Calu3 (cell line): ENCODE measurements at regions of chr9 and their contacts with region 1.

Region 1: GRCh38 chr9:85258823-85259370 is 482.9 kb downstream of the AGTPBP1 start:
- DNase-seq: peak; percentile 74
- H3K4me3 Mint-ChIP-seq: peak overlapping the region; percentile 62
- H3K27ac Mint-ChIP-seq: peak overlapping the region; percentile 87
- H3K4me1 Mint-ChIP-seq: peaks cover 25% of the 10 kb centered on the region
- H3K27me3 Mint-ChIP-seq: no peaks in the 10 kb centered on the region
- CTCF ChIP-seq: peak; percentile 45

Region 2: GRCh38 chr9:84697509-84698114 is 561.3 kb before region 1 on chr9:
- CTCF ChIA-PET with region 1: interaction called, 7 read pairs
- intact Hi-C with region 1: loop called (anchors 5 kb)
- DNase-seq: peak; percentile 78
- H3K4me3 Mint-ChIP-seq: no peak overlapping the region
- H3K27ac Mint-ChIP-seq: no peak overlapping the region
- H3K4me1 Mint-ChIP-seq: no peaks in the 10 kb centered on the region
- H3K27me3 Mint-ChIP-seq: no peaks in the 10 kb centered on the region
- CTCF ChIP-seq: peak; percentile 53

Region 3: GRCh38 chr9:84793251-84793650 is 465.6 kb before region 1 on chr9:
- CTCF ChIA-PET with region 1: no interaction called
- intact Hi-C with region 1: loop called (anchors 5 kb)
- DNase-seq: no peak
- H3K4me3 Mint-ChIP-seq: no peak overlapping the region
- H3K27ac Mint-ChIP-seq: no peak overlapping the region
- H3K4me1 Mint-ChIP-seq: peaks cover 27% of the 10 kb centered on the region
- H3K27me3 Mint-ChIP-seq: no peaks in the 10 kb centered on the region
- CTCF ChIP-seq: no peak

Region 4: GRCh38 chr9:84953797-84954705 is 304.8 kb before region 1 on chr9:
- CTCF ChIA-PET with region 1: interaction called, 3 read pairs
- intact Hi-C with region 1: loop called (anchors 10 kb)
- DNase-seq: peak; percentile 77
- H3K4me3 Mint-ChIP-seq: no peak overlapping the region
- H3K27ac Mint-ChIP-seq: no peak overlapping the region
- H3K4me1 Mint-ChIP-seq: peaks cover 9% of the 10 kb centered on the region
- H3K27me3 Mint-ChIP-seq: no peaks in the 10 kb centered on the region
- CTCF ChIP-seq: peak; percentile 75

Region 5: DNA sequence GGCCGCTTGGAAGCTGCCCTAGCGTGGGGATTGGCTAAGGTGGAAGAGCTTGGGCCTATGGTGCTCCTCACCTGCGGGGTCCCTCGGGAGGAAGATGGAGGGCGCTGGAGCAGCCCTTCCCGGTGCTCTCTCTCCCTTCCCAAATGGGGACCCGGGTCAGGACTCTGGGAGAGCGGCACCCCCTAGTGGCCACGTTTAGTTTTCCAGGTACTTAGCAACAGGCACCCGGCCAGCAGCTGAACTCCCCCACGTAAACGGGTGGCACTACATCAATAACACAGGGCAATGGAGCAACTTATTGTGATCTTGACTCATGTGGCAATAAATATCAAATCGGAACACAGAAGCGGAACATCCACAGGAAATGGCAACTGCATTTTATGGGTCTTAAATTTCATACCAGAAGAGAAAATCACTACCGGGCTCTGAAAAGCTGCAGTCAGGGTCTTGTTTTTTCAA is 166.3 kb after region 1 on chr9:
- CTCF ChIA-PET with region 1: interaction called, 4 read pairs
- intact Hi-C with region 1: loop called (anchors 10 kb)
- DNase-seq: peak; percentile 78
- H3K4me3 Mint-ChIP-seq: peak overlapping the region; percentile 1
- H3K27ac Mint-ChIP-seq: no peak overlapping the region
- H3K4me1 Mint-ChIP-seq: peaks cover 17% of the 10 kb centered on the region
- H3K27me3 Mint-ChIP-seq: peaks cover 14% of the 10 kb centered on the region
- CTCF ChIP-seq: peak; percentile 56

Region 6: GRCh38 chr9:85501456-85501855 is 242.6 kb after region 1 on chr9:
- CTCF ChIA-PET with region 1: no interaction called
- intact Hi-C with region 1: no loop called
- DNase-seq: no peak
- H3K4me3 Mint-ChIP-seq: no peak overlapping the region
- H3K27ac Mint-ChIP-seq: no peak overlapping the region
- H3K4me1 Mint-ChIP-seq: no peaks in the 10 kb centered on the region
- H3K27me3 Mint-ChIP-seq: peaks cover 49% of the 10 kb centered on the region
- CTCF ChIP-seq: no peak

Region 7: DNA sequence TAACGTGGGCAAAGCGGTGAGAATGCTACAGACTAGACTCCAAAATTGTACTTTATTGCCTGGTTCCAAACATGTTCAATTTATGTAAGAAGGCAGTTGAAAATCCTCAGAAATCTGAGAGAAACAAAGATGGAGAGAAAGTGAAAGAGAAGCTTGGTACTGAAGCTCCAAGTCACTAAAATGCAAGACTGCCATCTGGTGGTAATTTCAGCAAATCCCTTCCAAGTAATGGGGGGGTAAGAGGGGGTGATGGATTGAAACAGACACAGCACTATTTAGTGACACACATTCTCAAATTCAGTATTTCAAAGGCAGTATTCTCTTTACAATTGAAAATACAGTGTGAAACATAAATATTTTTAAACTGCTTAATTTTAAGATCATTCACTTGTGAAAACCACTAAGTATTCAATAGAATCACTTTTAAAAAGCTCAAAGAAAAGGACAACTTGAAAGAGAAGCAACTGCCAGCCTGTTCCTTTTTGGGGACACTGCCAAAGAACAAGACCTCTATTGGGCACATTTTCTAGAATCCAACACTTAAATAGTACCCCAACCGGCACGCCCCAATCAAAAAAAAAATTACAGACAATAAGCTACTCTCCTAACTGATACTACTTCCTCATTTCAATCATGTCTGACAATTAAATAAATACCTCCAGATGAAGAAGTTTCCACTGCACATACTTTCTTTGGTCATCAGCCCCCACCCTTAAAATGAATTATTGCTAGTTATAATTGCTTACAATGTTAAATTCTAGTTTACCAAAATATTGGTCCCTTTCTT is 351.4 kb after region 1 on chr9:
- CTCF ChIA-PET with region 1: interaction called, 4 read pairs
- intact Hi-C with region 1: loop called (anchors 2 kb)
- DNase-seq: peak; percentile 31
- H3K4me3 Mint-ChIP-seq: no peak overlapping the region
- H3K27ac Mint-ChIP-seq: peak overlapping the region; percentile 56
- H3K4me1 Mint-ChIP-seq: peaks cover 9% of the 10 kb centered on the region
- H3K27me3 Mint-ChIP-seq: no peaks in the 10 kb centered on the region
- CTCF ChIP-seq: peak; percentile 47